ENCODE measurements at regions of chr4 and their contacts with region 1.

Region 1: GRCh38 chr4:186137196-186137794 is 32.8 kb downstream of the FAM149A start:
- DNase-seq: no peak
- ATAC-seq: peak; percentile 77 to 85 (median 82)
- H3K4me3 ChIP-seq: peak overlapping the region in 1 of 3 donors; percentile 20
- H3K27ac ChIP-seq: no peak overlapping the region
- H3K4me1 ChIP-seq: peaks cover 0 to 4% (median 0%) of the 10 kb centered on the region in 4 donors
- H3K27me3 ChIP-seq: no peaks in the 10 kb centered on the region
- CTCF ChIP-seq: peak; percentile 57 to 83 (median 78)
- POLR2A ChIP-seq: no peak

Region 2: GRCh38 chr4:186067757-186068385 is 69.4 kb before region 1 on chr4:
- intact Hi-C with region 1: loop called (anchors 10 kb)
- DNase-seq: peak; percentile 66 to 83 (median 70)
- ATAC-seq: peak; percentile 95 to 99 (median 96)
- H3K4me3 ChIP-seq: peak overlapping the region; percentile 43 to 54 (median 50)
- H3K27ac ChIP-seq: peak overlapping the region in 2 of 3 donors; percentile 47 to 83
- H3K4me1 ChIP-seq: peaks cover 0 to 6% (median 0%) of the 10 kb centered on the region in 4 donors
- H3K27me3 ChIP-seq: no peaks in the 10 kb centered on the region
- CTCF ChIP-seq: peak; percentile 54 to 77 (median 68)
- POLR2A ChIP-seq: no peak

Region 3: DNA sequence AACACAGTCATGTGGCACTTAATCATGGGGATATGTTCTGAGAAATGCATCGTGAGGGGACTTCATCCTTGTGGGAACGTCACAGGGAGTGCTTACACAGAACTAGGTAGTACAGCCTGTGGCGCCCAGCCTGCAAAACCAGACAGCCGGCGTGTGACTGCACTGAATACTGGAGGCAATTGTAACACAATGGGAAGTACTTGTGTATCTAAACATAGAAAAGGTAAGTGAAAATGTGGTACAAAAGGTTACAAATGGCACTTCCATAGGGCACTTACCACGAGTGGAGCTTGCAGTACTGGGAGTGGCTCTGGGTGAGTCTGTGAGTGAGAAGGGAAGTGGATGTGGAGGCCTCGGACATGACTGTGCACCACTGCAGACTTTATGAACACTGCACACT is 63.1 kb before region 1 on chr4:
- intact Hi-C with region 1: loop called (anchors 10 kb)
- DNase-seq: no peak
- ATAC-seq: peak in 3 of 4 donors; percentile 39 to 47 (median 45)
- H3K4me3 ChIP-seq: no peak overlapping the region
- H3K27ac ChIP-seq: no peak overlapping the region
- H3K4me1 ChIP-seq: peaks cover 0 to 6% (median 0%) of the 10 kb centered on the region in 4 donors
- H3K27me3 ChIP-seq: no peaks in the 10 kb centered on the region
- CTCF ChIP-seq: no peak
- POLR2A ChIP-seq: no peak

Region 4: DNA sequence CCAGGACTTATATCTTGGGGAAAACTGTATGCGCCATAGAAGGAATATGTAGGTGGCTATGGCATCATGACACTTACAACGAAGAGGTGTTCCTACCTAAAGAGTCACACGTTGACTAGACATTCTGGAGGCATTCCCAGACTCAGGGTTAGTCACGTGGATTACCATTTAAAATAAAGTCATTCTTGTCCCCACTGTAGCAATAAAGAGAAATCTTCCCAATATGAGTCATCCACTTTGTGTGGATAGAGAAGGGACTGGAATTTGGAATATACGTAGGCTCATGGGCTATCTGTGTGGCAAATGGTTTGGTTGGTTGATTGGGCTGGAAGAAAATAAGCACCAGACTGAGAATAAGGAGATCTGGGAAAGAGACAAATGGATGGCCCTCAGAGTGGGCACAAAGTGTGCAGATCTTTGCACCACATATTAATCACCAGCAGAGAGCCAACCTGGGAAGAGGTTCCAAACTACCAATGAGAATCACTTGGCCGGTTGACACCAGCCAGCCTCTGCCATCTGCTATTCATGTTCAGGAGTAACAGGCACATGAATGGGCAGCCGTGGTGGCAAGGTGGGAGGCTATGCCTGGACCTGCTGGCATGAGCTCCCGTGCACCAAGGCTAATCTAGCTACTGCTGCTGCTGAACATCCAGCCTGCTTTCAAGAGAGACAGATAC is 377.1 kb after region 1 on chr4:
- intact Hi-C with region 1: no loop called
- DNase-seq: no peak
- ATAC-seq: no peak
- H3K4me3 ChIP-seq: no peak overlapping the region
- H3K27ac ChIP-seq: no peak overlapping the region
- H3K4me1 ChIP-seq: no peaks in the 10 kb centered on the region
- H3K27me3 ChIP-seq: no peaks in the 10 kb centered on the region
- CTCF ChIP-seq: no peak
- POLR2A ChIP-seq: no peak

Measured in right lobe of liver (tissue), 6 donors.